Right cardiac atrium (tissue), 5 donors: ENCODE measurements at regions of chr1 and their contacts with region 1.

Region 1: GRCh38 chr1:234997201-234997895 is 131.3 kb downstream of the TOMM20 start:
- DNase-seq: peak; percentile 99
- ATAC-seq: peak; percentile 95 to 96
- H3K4me3 ChIP-seq: no peak overlapping the region
- H3K27ac ChIP-seq: peak overlapping the region; percentile 99
- H3K4me1 ChIP-seq: peaks cover 9% of the 10 kb centered on the region
- H3K27me3 ChIP-seq: no peaks in the 10 kb centered on the region

Region 2: GRCh38 chr1:234955107-234955731 is 42.1 kb before region 1 on chr1:
- intact Hi-C with region 1: no loop called
- DNase-seq: peak; percentile 83 to 91 (median 90)
- ATAC-seq: peak; percentile 90 to 91
- H3K4me3 ChIP-seq: no peak overlapping the region
- H3K27ac ChIP-seq: peak overlapping the region; percentile 53
- H3K4me1 ChIP-seq: peaks cover 6% of the 10 kb centered on the region
- H3K27me3 ChIP-seq: no peaks in the 10 kb centered on the region

Region 3: DNA sequence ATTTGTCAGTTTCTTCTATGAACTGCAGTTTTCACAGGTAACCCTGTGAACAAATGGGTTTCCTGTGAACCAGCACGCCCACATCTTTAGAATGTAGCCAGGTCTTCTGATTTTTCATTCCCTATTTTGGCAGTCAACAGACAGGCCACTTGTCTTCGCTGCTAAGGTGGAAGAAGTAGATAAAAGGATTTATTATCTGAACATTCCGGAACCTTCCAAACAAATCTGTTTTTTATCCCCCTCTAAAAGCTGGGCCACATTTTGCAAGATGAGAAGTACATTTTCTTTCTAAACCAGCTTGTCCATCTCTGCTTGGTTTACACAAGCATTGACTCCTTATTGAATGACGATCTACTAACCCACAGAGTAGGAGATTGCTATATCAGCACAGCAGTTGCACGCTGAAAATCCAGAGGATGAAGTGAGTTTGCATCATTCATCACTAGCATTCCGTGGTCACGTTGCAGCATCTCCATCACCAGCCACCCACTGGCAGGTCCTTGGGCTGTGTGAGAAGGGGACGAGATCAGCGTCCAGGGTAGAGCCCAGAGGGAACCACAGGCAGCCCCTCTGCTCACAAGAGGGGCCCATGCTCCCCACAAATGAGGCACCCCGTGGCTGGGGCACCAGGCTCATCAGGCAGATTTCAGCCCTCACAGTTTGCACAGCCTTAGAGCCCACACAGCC is 47.8 kb after region 1 on chr1:
- intact Hi-C with region 1: loop called in 1 of 4 experiments (anchors 5 kb)
- DNase-seq: no peak
- ATAC-seq: no peak
- H3K4me3 ChIP-seq: no peak overlapping the region
- H3K27ac ChIP-seq: no peak overlapping the region
- H3K4me1 ChIP-seq: peaks cover 9% of the 10 kb centered on the region
- H3K27me3 ChIP-seq: no peaks in the 10 kb centered on the region